Breast epithelium (tissue), 4 donors: ENCODE measurements at regions of chr5 and their contacts with region 1.

Region 1: GRCh38 chr5:156560002-156560401 is 233.0 kb downstream of the SGCD start:
- DNase-seq: no peak
- H3K4me3 ChIP-seq: no peak overlapping the region
- H3K27ac ChIP-seq: no peak overlapping the region
- H3K4me1 ChIP-seq: no peaks in the 10 kb centered on the region
- H3K27me3 ChIP-seq: no peaks in the 10 kb centered on the region
- CTCF ChIP-seq: no peak
- POLR2A ChIP-seq: no peak

Region 2: DNA sequence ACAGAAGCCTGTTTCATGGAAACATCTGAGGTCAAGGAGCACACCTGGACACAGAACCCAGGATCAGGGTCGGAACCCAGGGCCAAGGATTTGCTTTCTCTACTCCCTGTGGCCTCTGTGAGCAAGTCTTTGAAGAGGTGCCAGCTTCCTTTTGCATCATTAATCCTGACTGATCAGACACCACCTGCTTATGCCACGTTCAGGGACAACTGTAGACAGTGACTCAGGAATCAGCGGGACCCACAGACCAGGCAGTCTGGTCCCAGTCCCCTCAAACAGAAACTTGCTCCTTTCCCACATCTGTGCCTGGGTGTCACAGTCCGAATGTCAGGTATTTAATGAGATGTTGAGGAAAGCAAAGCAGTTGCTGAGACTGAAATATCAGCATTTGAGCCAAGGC is 78.3 kb before region 1 on chr5:
- intact Hi-C with region 1: loop called (anchors 2 kb)
- DNase-seq: no peak
- H3K4me3 ChIP-seq: no peak overlapping the region
- H3K27ac ChIP-seq: no peak overlapping the region
- H3K4me1 ChIP-seq: no peaks in the 10 kb centered on the region
- H3K27me3 ChIP-seq: no peaks in the 10 kb centered on the region
- CTCF ChIP-seq: no peak
- POLR2A ChIP-seq: no peak

Region 3: GRCh38 chr5:156543348-156544145 is 16.5 kb before region 1 on chr5:
- intact Hi-C with region 1: no loop called
- DNase-seq: no peak
- H3K4me3 ChIP-seq: no peak overlapping the region
- H3K27ac ChIP-seq: no peak overlapping the region
- H3K4me1 ChIP-seq: no peaks in the 10 kb centered on the region
- H3K27me3 ChIP-seq: no peaks in the 10 kb centered on the region
- CTCF ChIP-seq: no peak
- POLR2A ChIP-seq: no peak